OCI-LY7 (cell line): ENCODE measurements at regions of chr10 and their contacts with region 1.

Region 1: GRCh38 chr10:45464958-45465567 is 91.0 kb downstream of the ALOX5 start:
- DNase-seq: peak; percentile 82
- H3K4me3 ChIP-seq: peak overlapping the region; percentile 69
- H3K27ac ChIP-seq: peak overlapping the region; percentile 95
- H3K4me1 ChIP-seq: peaks cover 67% of the 10 kb centered on the region
- CTCF ChIP-seq: peak; percentile 98

Region 2: GRCh38 chr10:45008524-45009161 is 456.4 kb before region 1 on chr10:
- CTCF ChIA-PET with region 1: no interaction called
- POLR2A ChIA-PET with region 1: no interaction called
- intact Hi-C with region 1: loop called (anchors 10 kb)
- DNase-seq: peak; percentile 84
- H3K4me3 ChIP-seq: no peak overlapping the region
- H3K27ac ChIP-seq: no peak overlapping the region
- H3K4me1 ChIP-seq: no peaks in the 10 kb centered on the region
- CTCF ChIP-seq: peak; percentile 96

Region 3: GRCh38 chr10:45198596-45199379 is 266.3 kb before region 1 on chr10:
- CTCF ChIA-PET with region 1: no interaction called
- POLR2A ChIA-PET with region 1: no interaction called
- intact Hi-C with region 1: no loop called
- DNase-seq: no peak
- H3K4me3 ChIP-seq: no peak overlapping the region
- H3K27ac ChIP-seq: no peak overlapping the region
- H3K4me1 ChIP-seq: no peaks in the 10 kb centered on the region
- CTCF ChIP-seq: no peak

Region 4: GRCh38 chr10:45249978-45250693 is 214.9 kb before region 1 on chr10:
- CTCF ChIA-PET with region 1: interaction called, 3 read pairs
- POLR2A ChIA-PET with region 1: interaction called, 26 read pairs
- intact Hi-C with region 1: loop called (anchors 1 kb)
- DNase-seq: peak; percentile 91
- H3K4me3 ChIP-seq: peak overlapping the region; percentile 54
- H3K27ac ChIP-seq: peak overlapping the region; percentile 72
- H3K4me1 ChIP-seq: peaks cover 10% of the 10 kb centered on the region
- CTCF ChIP-seq: peak; percentile 84

Region 5: DNA sequence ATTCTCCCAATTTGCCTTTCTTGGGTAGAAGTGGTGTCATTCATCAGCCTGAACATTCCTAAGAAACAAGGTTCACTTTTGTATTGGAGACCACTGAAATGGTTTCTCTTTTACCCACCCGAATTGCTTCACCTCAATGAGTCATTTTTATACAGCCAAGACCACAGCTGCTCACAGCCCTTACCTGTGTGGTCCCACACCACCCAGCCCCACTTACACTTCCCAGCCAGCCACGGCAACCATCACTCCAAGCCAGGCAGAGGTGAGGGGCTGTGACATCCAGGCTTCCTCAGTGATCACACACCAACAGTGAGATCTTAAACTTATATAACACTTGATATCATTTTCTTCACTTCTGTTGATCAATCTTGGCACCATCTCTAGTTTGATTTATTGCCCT is 170.4 kb before region 1 on chr10:
- CTCF ChIA-PET with region 1: no interaction called
- POLR2A ChIA-PET with region 1: no interaction called
- intact Hi-C with region 1: no loop called
- DNase-seq: no peak
- H3K4me3 ChIP-seq: no peak overlapping the region
- H3K27ac ChIP-seq: no peak overlapping the region
- H3K4me1 ChIP-seq: no peaks in the 10 kb centered on the region
- CTCF ChIP-seq: no peak

Region 6: GRCh38 chr10:45580371-45581215 is 115.5 kb after region 1 on chr10:
- CTCF ChIA-PET with region 1: interaction called, 3 read pairs
- POLR2A ChIA-PET with region 1: interaction called, 3 read pairs
- intact Hi-C with region 1: loop called (anchors 5 kb)
- DNase-seq: peak; percentile 23
- H3K4me3 ChIP-seq: peak overlapping the region; percentile 68
- H3K27ac ChIP-seq: peak overlapping the region; percentile 68
- H3K4me1 ChIP-seq: peaks cover 22% of the 10 kb centered on the region
- CTCF ChIP-seq: no peak

Region 7: DNA sequence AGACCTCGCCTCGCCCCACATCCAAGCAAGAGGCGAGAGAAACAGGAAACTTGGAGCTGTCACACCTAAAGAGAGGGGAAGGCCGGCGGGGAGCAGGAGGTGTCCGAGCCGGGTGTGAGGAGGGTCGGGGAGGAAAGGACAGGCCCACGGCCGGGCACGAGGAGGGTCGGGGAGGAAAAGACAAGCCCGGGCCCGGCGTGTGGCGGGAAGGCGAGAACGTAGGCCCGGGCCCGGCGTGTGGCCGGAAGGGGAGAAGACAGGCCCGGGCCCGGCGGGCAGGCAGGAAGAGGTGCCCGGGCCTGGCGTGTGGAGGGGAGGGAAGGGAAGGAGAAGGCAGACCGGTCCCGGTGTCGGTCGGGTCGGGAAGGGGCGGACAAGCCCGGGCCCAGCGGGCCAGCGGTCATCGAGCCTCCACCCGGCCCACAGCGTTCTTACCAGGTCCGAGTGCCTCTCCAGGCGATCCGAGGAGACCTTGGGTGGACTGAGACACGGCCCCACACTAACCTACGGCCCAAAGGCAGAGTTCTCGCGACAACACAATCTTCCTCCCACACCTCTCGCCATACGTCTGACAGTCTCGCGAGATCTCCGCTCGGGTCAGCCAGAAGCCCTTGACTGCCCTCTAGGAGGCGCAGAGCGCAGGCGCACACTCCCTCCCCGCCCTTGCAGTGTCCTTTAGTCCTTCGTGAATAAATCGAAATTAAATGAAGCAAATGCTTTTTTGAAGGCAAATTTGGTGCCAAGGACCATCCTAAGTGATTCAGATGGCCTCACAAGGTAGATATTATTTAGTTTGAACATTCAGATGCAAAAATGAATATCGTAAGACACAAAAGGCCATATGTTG is 565.3 kb after region 1 on chr10 and contains the start of gene NCOA4:
- CTCF ChIA-PET with region 1: interaction called, 4 read pairs
- POLR2A ChIA-PET with region 1: no interaction called
- intact Hi-C with region 1: loop called (anchors 2 kb)
- DNase-seq: peak; percentile 99
- H3K4me3 ChIP-seq: peak within 1 kb of the TSS; percentile 87
- H3K27ac ChIP-seq: peak within 1 kb of the TSS; percentile 44
- H3K4me1 ChIP-seq: peaks cover 18% of the 10 kb centered on the region
- CTCF ChIP-seq: peak; percentile 83
- total RNA-seq, gene NCOA4: 78.8 and 100.0 TPM in 2 replicates